ENCODE measurements at regions of chr12 and their contacts with region 1.

Region 1: GRCh38 chr12:109093022-109093918 is at the start of gene ALKBH2:
- DNase-seq: peak; percentile 92
- H3K4me3 Mint-ChIP-seq: peak within 1 kb of the TSS; percentile 89
- H3K27ac Mint-ChIP-seq: peak within 1 kb of the TSS; percentile 84
- H3K4me1 Mint-ChIP-seq: peaks cover 22% of the 10 kb centered on the region
- H3K27me3 Mint-ChIP-seq: no peaks in the 10 kb centered on the region
- total RNA-seq, gene ALKBH2: 43.6 and 47.4 TPM in 2 replicates

Region 2: DNA sequence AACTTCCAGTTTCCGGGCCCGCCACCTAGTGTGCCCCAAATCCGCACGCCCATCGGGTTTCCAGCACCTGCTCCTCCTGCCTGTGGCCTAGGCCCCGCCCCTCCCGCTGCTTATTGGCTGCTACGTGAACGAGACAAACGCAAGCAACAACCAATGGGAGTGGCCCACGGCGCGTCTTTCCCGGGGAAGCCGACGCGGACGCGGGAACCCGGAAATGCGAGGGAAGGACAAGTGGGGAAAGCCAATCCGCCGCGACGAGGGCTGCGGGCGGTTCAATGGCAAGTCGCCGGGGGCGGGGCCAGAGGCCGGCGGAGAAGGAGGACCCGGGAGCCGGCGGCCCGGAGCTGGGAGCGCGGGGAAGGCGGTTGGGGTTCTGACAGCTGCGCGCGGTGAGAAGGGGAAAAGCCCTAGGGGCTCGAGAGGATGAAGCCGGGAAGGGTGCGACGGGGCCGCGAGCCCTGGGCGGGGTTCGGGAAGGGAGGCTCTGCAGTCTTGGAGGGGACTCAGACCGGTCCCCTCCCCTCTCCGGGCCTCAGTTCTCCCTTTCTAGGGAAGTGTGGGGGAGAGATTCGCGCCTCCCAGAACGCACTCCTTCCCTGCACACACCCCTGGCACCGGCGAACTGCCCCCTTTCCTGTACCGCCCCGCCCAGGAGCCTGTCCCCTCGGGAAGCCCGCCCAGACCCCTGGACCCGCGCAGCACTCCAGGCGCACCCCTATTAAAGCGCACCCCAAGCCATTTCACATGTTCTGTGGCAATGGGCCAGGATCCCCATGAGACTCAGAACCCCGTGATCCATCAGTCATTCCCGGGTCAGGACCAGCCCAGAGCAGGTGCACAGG is 578.1 kb before region 1 on chr12 and contains the start of gene FICD:
- intact Hi-C with region 1: loop called (anchors 1 kb)
- DNase-seq: peak; percentile 99
- H3K4me3 Mint-ChIP-seq: peak within 1 kb of the TSS; percentile 91
- H3K27ac Mint-ChIP-seq: peak within 1 kb of the TSS; percentile 82
- H3K4me1 Mint-ChIP-seq: peaks cover 23% of the 10 kb centered on the region
- H3K27me3 Mint-ChIP-seq: peaks cover 3% of the 10 kb centered on the region
- total RNA-seq, gene FICD: 6.1 and 6.8 TPM in 2 replicates

Region 3: DNA sequence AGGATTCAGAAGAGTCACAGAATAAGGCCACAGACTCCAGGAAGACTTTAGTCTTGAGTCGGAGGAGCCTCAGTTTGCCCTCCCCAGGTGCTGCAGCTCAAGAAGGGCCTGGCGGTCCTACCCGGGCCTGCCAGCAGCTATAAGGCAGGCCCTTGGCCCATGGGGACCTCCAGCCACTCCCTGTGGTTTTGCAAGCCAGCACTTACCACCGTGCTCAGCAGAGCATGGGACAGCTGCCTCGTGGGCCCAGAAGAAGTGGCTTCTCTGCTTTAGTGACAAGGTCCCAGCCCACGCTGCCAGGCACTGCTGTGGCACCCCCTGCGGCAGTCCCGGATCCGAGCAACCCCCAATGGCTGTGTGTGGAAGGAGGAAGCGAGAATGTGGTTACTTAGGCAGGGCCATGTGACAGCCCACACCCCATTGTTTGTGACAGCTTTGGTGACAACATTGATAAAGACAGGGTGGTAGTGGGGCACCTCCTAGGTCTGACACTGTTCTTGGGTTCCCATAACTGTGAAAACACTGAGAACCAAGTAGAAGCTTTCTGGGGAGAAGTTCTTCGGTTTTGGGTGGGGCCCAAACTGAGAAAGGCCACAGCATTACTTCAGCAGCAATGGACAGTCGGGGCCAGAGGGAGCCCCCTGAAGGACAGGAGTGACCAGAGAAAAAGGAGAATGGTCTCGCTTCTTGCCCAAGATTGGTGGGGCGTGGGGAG is 459.6 kb before region 1 on chr12 and contains the start of gene SELPLG:
- intact Hi-C with region 1: loop called (anchors 2 kb)
- DNase-seq: peak; percentile 82
- H3K4me3 Mint-ChIP-seq: peak within 1 kb of the TSS; percentile 94
- H3K27ac Mint-ChIP-seq: peak within 1 kb of the TSS; percentile 99
- H3K4me1 Mint-ChIP-seq: peaks cover 69% of the 10 kb centered on the region
- H3K27me3 Mint-ChIP-seq: no peaks in the 10 kb centered on the region
- total RNA-seq, gene SELPLG: 51.9 and 53.5 TPM in 2 replicates

Region 4: GRCh38 chr12:108803428-108804105 is 289.7 kb before region 1 on chr12:
- intact Hi-C with region 1: loop called (anchors 1 kb)
- DNase-seq: peak; percentile 54
- H3K4me3 Mint-ChIP-seq: no peak overlapping the region
- H3K27ac Mint-ChIP-seq: peak overlapping the region; percentile 77
- H3K4me1 Mint-ChIP-seq: peaks cover 5% of the 10 kb centered on the region
- H3K27me3 Mint-ChIP-seq: no peaks in the 10 kb centered on the region

Region 5: DNA sequence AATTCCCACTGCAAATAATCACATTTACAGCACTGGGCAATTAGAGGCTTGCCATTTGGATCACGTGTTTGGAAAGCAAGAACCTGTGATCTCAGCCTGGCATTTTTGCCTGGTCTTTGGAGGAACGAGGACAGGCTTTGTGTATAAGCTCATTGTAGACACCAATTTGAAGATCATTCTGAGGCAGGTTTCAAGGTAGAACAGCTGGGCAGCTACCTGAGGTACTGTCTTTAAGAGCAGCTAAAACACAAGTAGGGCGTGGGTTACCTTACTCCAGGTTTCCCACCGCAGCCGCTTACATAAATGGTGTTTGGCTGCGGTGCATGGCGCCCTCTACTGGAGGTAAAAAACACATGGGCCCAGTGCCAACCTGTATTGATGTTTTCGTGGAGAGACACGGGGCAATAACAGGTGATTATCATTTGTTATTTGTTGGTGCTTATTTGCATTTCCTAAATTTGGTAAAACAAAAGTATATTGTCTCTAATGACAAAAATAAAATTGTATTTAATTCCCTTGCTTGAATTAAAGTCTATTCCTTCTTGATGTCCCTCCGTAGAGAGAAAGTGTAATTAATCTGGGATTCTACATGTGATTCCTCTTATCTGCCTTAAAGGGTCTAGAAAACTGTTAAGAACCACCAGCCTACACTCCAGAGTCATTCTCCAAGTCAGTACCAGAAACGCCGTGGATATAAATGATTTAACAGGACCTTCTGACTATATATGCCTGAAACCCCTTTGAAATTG is 142.1 kb before region 1 on chr12:
- intact Hi-C with region 1: loop called (anchors 1 kb)
- DNase-seq: peak; percentile 50
- H3K4me3 Mint-ChIP-seq: no peak overlapping the region
- H3K27ac Mint-ChIP-seq: no peak overlapping the region
- H3K4me1 Mint-ChIP-seq: peaks cover 7% of the 10 kb centered on the region
- H3K27me3 Mint-ChIP-seq: peaks cover 17% of the 10 kb centered on the region

Region 6: GRCh38 chr12:109154451-109155438 is 61.5 kb after region 1 on chr12:
- intact Hi-C with region 1: loop called (anchors 1 kb)
- DNase-seq: peak; percentile 71
- H3K4me3 Mint-ChIP-seq: peak overlapping the region; percentile 85
- H3K27ac Mint-ChIP-seq: peak overlapping the region; percentile 63
- H3K4me1 Mint-ChIP-seq: peaks cover 17% of the 10 kb centered on the region
- H3K27me3 Mint-ChIP-seq: peaks cover 15% of the 10 kb centered on the region

Region 7: DNA sequence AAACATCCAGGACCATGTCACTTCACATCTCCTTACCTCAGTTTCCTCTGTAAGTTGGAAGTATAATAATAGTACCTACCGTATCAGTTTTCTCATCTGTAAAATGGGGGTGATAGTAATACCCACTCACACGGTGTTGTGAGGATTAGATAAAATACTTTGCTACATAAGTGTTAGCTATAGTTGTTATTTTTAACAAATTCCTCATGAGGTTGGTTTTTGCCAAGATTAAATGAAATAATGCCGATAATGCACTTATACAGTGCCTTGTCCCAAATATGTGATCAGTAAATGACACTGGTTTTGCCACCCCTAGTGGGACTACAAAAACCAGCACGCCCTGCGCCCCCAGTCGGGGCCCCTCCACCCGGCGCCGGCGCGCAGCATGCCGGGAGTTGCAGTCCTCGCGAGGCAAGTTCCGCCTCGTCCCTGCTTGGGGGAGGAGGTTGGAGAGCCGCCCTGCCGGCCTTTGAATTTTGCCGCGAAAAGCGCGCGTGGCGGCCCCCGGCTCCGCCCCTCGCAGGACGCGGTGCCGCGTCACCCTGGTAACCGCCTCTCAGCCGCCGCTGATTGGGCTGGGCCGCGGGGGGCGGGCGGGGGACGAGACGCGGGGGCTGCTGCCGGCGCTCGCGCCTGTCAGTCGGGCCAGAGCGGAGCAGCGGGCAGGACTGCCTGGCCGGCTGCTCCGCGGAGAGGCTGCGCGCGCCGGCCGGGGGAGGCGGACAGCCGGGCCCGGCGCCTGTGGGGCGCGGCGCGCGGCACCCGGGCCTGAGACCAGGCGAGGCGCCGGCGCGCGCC is 620.1 kb after region 1 on chr12 and contains the start of gene FAM222A:
- intact Hi-C with region 1: loop called (anchors 5 kb)
- DNase-seq: peak; percentile 94
- H3K4me3 Mint-ChIP-seq: no peak within 1 kb of the TSS
- H3K27ac Mint-ChIP-seq: no peak within 1 kb of the TSS
- H3K4me1 Mint-ChIP-seq: no peaks in the 10 kb centered on the region
- H3K27me3 Mint-ChIP-seq: peaks cover 62% of the 10 kb centered on the region
- total RNA-seq, gene FAM222A: 2.4 TPM in 2 replicates